AG04449 (cell line): ENCODE measurements at regions of chr19 and their contacts with region 1.

Region 1: DNA sequence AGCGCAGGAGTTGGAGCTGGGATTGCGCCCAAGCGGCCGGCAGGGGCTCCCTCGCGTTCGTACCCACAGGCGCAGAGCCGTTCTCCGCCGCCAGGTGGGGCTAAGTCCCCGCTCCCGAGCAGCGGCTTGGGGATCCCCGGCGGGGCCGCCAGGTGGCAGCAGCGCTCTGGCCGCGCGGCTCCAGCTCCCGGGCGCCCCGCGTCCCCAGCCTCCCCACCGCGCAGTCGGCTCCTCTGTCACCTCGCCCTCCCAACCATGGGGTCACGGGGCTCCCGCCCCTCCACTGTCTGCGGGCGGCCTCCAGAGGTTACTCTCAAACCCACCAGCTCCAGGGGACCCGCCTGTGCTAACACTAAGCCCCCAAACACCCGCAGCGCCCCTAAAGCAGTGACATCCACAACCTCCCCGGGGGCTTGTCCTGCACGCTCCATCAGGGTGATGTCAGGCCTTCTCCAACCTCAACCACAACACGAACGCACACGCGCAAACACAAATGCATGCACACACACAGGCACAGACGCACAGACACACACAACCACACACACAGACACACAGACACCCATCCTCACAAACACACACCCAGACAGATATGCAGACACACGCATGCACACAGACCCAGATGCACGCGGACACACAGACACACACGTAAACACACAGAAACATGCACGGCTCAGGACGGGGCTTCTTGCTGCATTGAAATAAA is 18.4 kb upstream of the KCTD15 start:
- DNase-seq: no peak
- H3K4me3 ChIP-seq: no peak overlapping the region
- CTCF ChIP-seq: peak; percentile 99

Region 2: GRCh38 chr19:33430674-33431277 is 347.5 kb before region 1 on chr19:
- CTCF ChIA-PET with region 1: interaction called, 311 read pairs
- POLR2A ChIA-PET with region 1: no interaction called
- DNase-seq: no peak
- H3K4me3 ChIP-seq: no peak overlapping the region
- CTCF ChIP-seq: peak; percentile 97

Region 3: DNA sequence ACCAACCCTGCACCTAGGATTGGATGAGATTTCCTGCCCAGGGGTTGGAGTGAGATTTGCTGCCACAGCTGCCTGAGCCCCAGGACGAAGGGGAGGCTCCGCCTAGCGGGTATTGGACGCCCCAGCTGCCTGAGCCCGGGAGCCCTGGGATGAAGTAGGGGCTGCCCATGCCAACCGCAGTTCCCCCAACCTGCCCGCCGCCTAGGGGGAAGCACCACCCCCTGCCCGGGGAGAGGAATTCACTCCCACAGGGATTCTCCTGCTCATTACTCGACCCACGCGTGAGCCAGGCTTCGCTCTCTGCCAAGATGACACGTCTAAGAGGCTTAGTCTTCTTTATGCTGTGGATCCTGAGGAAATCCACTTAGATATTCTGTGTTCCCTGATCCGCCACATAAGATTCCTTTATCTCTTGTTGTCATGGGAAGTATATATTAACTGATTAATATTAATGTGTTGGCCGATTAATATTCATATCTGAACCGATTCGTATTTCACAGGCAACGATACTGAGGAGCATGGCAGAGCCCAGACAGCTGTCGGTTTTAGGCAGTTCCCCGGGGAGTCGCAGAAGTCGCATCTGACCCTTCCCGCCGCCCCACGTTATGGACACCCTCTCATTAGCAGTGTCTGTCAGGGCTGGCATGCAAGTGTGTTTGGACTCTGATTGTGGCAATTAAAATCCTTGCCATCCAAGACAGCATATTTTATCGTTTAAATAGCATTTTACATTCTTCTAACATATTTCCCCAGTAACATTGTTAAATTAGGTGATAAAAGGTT is 26.0 kb before region 1 on chr19:
- CTCF ChIA-PET with region 1: no interaction called
- POLR2A ChIA-PET with region 1: no interaction called
- DNase-seq: no peak
- H3K4me3 ChIP-seq: no peak overlapping the region
- CTCF ChIP-seq: no peak

Region 4: DNA sequence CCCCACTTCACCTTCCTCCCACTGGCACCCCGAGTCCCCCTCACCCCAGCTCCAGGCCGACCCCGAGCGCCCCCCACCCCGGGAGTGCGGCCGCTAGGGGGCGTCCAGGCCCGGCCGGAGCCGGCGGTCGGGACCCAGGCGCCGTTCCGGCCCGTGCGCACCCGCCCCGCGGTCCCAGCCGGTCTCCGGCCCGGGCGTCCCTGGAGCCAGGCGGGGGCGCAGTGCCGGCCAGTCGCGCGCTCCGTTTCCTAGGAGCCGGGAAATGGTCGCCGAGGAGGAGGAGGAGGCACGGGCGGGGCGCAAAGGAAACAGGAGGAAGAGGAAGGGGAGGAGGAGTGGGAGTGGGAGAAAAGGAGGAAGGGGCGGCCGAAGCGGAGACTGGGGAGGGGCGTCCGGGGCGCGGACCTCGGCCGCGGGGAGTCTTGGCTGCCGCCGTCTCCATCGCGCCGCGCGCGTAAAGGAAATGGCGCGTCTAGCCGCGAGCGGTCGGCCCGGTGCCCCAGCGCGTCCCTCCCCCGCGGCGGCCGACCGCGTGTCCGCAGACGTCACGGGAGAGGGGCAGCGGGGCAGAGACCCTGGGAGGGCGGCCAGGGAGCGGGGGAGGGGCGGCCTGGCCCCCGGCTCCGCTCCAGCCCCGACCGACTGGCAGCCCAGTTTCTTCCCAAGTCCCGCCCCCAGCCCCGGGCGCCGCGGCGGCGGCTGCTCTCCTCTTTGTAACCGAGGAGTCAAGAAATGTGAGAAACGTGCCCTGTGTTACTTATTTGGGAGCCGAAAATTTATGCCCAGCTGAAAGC is 17.3 kb after region 1 on chr19:
- CTCF ChIA-PET with region 1: interaction called, 59 read pairs
- POLR2A ChIA-PET with region 1: no interaction called
- DNase-seq: no peak
- H3K4me3 ChIP-seq: peak overlapping the region; percentile 74
- CTCF ChIP-seq: peak; percentile 68

Region 5: GRCh38 chr19:34088303-34088702 is 310.1 kb after region 1 on chr19:
- CTCF ChIA-PET with region 1: interaction called, 16 read pairs
- POLR2A ChIA-PET with region 1: no interaction called
- DNase-seq: no peak
- H3K4me3 ChIP-seq: no peak overlapping the region
- CTCF ChIP-seq: no peak

Region 6: GRCh38 chr19:34145741-34146202 is 367.5 kb after region 1 on chr19:
- CTCF ChIA-PET with region 1: interaction called, 50 read pairs
- POLR2A ChIA-PET with region 1: no interaction called
- DNase-seq: no peak
- H3K4me3 ChIP-seq: no peak overlapping the region
- CTCF ChIP-seq: peak; percentile 64